PC-9 (cell line): ENCODE measurements at regions of chr19 and their contacts with region 1.

Region 1: GRCh38 chr19:38676023-38676877 is 28.8 kb downstream of the ACTN4 start:
- DNase-seq: no peak
- H3K4me3 ChIP-seq: no peak overlapping the region
- H3K27ac ChIP-seq: peak overlapping the region; percentile 37; the same call in 1 of the 2 replicates
- H3K4me1 ChIP-seq: peaks cover 41% of the 10 kb centered on the region
- H3K27me3 ChIP-seq: no peaks in the 10 kb centered on the region
- CTCF ChIP-seq: no peak

Region 2: DNA sequence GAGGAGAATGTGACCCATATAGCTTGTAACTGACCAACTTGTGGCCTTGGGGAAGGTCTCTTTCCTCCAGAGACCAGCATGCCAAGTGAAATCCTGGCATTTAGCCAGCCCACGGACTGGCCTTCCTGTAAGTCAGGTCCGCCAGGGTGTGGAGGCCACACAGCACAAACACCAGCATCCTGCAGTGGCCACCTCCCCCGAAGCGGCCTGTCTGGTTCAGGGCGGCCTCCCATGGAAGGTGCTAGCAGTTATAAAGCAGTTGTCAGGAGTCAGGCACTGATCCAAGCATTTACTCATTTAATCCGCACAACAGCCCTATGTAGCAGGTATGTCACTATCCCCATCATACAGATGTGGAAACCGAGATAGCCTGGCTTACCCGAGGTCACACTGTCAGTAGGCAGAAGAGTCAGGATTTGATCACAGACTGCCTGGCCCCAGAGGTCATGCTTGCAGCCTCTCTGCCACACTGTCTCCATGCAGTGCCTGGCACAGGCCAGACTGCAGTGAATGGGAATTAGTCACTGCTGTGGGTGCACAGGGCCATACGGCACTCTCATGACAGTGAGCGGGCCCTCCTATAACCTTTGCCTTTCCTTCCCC is 31.4 kb after region 1 on chr19:
- CTCF ChIA-PET with region 1: interaction called, 8 read pairs
- POLR2A ChIA-PET with region 1: interaction called, 20 read pairs
- intact Hi-C with region 1: no loop called
- DNase-seq: peak; percentile 69 to 84
- H3K4me3 ChIP-seq: no peak overlapping the region
- H3K27ac ChIP-seq: peak overlapping the region; percentile 46
- H3K4me1 ChIP-seq: peaks cover 26% of the 10 kb centered on the region
- H3K27me3 ChIP-seq: no peaks in the 10 kb centered on the region
- CTCF ChIP-seq: no peak

Region 3: DNA sequence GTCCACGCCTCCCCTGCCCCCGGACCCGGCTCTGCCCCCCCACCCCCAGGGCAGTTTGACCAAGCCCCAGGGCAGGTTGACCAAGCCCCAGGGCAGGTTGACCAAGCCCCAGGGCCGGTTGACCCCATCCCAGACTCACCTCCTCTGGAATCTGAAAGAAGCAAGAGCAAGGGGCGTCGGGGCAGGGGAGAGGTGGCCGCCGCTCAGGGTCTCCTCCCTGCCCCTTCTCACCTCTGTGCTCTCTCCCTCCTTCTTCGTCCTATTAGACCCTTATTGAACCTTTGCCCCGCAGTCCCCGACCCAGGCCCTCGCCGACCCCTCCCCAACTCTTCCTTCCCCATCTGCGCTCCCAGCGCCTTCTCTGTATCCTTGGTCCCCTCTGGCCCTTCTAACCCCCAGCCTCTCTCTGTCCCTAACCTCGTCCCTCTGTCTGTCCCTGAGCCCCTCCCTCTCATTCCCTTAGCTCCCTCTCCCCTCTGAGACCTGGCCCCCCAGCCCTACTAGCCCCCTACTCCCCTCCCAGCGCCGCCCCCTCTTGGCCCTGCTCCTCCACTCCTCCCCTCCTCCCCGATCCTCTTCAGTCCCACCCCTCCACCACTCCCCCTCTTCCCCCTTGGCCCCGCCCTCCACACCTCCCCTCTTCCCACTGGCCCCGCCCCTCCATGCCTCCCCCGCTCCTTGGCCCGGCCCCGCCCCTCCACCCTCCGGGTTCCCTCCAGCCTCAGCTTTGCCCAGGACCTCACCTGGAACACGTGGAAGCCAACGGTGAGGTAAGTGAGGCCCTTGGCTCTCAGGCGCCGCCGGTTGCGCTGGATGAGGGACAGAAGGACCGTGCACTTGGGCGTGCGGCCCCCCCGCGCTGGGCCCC is 60.4 kb after region 1 on chr19:
- CTCF ChIA-PET with region 1: no interaction called
- POLR2A ChIA-PET with region 1: interaction called, 12 read pairs
- intact Hi-C with region 1: no loop called
- DNase-seq: peak in 1 of 2 experiments; percentile 47
- H3K4me3 ChIP-seq: peak overlapping the region; percentile 49; the same call in 1 of the 2 replicates
- H3K27ac ChIP-seq: peak overlapping the region; percentile 41; the same call in 1 of the 2 replicates
- H3K4me1 ChIP-seq: peaks cover 30% of the 10 kb centered on the region
- H3K27me3 ChIP-seq: no peaks in the 10 kb centered on the region
- CTCF ChIP-seq: no peak